ENCODE measurements at regions of chr11 and their contacts with region 1.

Region 1: GRCh38 chr11:97060184-97060583 is 670.4 kb downstream of the JRKL start:
- DNase-seq: no peak
- ATAC-seq: no peak
- H3K4me3 Mint-ChIP-seq: no peak overlapping the region
- H3K27ac Mint-ChIP-seq: no peak overlapping the region
- H3K4me1 Mint-ChIP-seq: no peaks in the 10 kb centered on the region
- H3K27me3 Mint-ChIP-seq: no peaks in the 10 kb centered on the region
- CTCF ChIP-seq: no peak

Region 2: DNA sequence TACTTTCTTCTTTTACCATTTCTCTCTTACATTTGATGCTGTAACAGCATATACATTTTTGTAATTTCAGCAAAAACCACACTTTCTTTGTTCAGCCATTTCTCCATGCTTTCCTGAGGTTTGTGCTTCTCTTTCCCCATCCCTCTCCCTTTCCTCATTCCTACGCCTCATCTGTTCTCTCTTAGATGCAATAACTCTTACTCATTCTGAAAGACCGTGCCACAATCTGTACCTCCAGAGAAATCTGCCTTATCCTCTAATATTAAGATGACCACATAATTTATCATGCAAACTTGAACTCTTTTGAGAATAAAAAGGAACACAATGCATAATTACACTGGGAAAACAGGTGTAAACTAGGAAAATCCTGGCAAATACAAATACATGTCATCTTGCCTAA is 81.4 kb before region 1 on chr11:
- CTCF ChIA-PET with region 1: no interaction called
- POLR2A ChIA-PET with region 1: no interaction called
- intact Hi-C with region 1: no loop called
- DNase-seq: no peak
- ATAC-seq: no peak
- H3K4me3 Mint-ChIP-seq: no peak overlapping the region
- H3K27ac Mint-ChIP-seq: no peak overlapping the region
- H3K4me1 Mint-ChIP-seq: no peaks in the 10 kb centered on the region
- H3K27me3 Mint-ChIP-seq: no peaks in the 10 kb centered on the region
- CTCF ChIP-seq: no peak

Region 3: GRCh38 chr11:97015327-97015726 is 44.9 kb before region 1 on chr11:
- CTCF ChIA-PET with region 1: no interaction called
- POLR2A ChIA-PET with region 1: no interaction called
- intact Hi-C with region 1: loop called (anchors 5 kb)
- DNase-seq: no peak
- ATAC-seq: no peak
- H3K4me3 Mint-ChIP-seq: no peak overlapping the region
- H3K27ac Mint-ChIP-seq: no peak overlapping the region
- H3K4me1 Mint-ChIP-seq: no peaks in the 10 kb centered on the region
- H3K27me3 Mint-ChIP-seq: no peaks in the 10 kb centered on the region
- CTCF ChIP-seq: no peak